ENCODE measurements at regions of chr11 and their contacts with region 1.

Region 1: DNA sequence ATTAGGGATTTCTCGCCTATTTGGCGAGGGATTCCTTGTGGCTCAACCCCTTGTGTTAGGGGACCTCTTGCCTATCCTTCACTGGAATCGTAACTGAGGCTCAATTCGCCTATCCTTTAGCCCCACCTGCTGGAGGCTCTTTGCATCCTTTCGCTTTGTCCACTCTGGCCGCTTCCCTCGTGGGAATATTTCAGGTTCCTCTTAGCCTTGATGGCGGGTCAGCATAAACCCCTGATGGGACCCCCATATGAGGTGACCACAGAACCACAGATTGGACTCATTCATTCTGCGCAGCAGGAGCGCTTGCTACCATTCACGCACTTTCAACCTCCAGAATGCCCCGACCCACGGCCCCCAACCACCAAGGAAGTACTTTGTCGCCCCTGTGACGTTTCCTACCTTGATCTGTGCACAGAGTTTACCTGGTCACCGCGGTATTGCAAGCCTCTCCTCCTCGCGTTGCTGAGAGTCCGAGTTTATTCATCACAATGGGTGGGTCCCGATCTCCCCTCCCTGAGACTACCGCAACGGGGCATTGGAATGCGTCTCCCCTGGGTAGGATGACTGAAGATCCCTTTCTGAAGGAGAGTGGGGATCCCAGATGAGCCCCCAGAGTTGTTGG is at the start of gene OR52N2:
- H3K4me3 ChIP-seq: peak within 1 kb of the TSS; percentile 28
- H3K27ac ChIP-seq: no peak within 1 kb of the TSS
- H3K4me1 ChIP-seq: no peaks in the 10 kb centered on the region
- CTCF ChIP-seq: peak; percentile 53

Region 2: DNA sequence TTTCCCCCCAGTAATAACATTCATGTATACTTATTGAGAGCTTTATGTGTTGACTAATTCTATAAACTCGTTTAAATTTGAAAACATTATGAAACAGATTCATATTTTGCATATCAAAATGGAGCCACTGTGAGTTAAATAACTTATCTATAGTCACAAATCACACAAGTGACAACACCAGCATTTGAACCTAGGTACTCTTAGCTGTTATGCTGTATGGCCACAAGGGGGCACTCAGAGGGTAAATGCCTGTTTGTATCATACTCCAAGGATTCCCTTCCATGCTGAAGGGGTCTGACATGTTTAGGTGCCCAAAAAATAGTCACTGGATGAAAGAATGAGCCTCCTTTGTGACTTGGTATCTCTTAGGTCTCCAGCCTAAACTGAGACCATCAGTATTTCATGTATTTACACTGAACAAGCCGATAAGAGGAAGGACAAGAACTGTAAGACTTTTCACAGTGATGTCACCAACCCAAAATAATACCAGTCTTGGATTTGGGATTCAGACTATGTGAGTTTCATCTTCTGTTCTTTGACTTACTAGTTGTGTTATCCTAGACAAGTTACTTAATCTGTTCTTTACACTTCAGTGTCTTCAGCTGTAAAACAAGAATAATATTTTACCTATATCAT is 332.3 kb before region 1 on chr11:
- CTCF ChIA-PET with region 1: interaction called, 10 read pairs
- POLR2A ChIA-PET with region 1: no interaction called
- H3K4me3 ChIP-seq: no peak overlapping the region
- H3K27ac ChIP-seq: no peak overlapping the region
- H3K4me1 ChIP-seq: no peaks in the 10 kb centered on the region
- CTCF ChIP-seq: no peak